ENCODE measurements at regions of chr7 and their contacts with region 1.

Region 1: DNA sequence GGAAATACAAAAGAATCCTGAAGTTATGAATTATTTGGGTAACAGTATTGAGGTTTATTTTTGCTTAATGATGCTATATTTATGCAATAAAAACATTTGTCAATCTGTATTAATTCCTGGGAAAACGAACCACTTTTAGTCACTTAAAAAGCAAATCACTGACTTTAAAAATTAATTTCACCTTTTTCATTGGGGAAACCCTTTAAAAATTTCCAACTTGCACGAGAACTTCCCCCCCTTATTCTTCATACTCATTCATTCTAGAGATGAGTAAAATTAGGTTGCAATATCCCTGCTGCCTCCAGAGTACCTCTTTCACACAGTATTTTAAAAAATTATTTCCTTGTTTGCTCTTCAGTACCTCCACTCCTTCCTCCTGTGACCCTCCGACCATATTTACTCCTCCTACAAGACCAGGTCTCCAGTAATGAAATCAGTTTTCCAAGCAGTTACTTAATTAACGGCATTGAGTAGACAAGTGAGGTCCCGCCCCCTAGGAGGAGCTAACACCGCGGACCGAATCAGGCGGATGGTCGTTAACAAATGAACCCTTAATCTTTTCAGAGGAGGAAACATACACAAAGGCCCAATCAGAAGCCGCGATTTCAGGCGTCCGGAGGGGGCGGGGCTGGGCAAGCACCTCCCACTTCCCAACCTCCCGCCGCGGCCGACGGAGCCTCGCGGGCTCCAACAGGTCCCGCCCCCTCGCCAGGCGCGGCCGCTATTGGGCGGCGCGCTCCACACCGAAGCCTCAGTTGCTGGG is 465 bp upstream of the TRIM24 start:
- DNase-seq: peak; percentile 97
- H3K4me3 Mint-ChIP-seq: peak overlapping the region; percentile 79
- H3K27ac Mint-ChIP-seq: peak overlapping the region; percentile 18
- H3K4me1 Mint-ChIP-seq: peaks cover 26% of the 10 kb centered on the region
- H3K27me3 Mint-ChIP-seq: no peaks in the 10 kb centered on the region

Region 2: GRCh38 chr7:137930581-137930980 is 529.0 kb before region 1 on chr7:
- intact Hi-C with region 1: no loop called
- DNase-seq: no peak
- H3K4me3 Mint-ChIP-seq: no peak overlapping the region
- H3K27ac Mint-ChIP-seq: no peak overlapping the region
- H3K4me1 Mint-ChIP-seq: peaks cover 32% of the 10 kb centered on the region
- H3K27me3 Mint-ChIP-seq: no peaks in the 10 kb centered on the region

Region 3: DNA sequence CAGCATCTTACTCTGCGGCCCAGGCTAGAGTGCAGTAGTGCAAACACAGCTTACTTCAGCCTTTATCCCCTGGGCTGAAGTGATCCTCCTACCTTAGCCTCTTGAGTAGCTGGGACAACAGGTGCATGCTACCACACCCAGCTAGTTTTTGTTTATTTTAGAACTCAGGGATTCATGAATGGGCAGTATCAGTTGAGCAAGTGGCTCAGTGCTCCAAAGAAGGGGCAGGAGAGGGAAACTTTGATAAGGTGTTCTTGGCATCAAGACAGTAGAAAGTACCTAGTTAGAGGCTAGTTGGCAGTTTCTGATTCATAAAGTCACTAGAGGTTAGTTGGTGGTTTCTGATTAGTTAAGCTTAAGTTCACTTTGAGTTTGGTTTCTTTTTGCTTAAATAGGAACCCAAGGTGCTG is 18.9 kb after region 1 on chr7:
- intact Hi-C with region 1: loop called (anchors 2 kb)
- DNase-seq: no peak
- H3K4me3 Mint-ChIP-seq: no peak overlapping the region
- H3K27ac Mint-ChIP-seq: no peak overlapping the region
- H3K4me1 Mint-ChIP-seq: peaks cover 48% of the 10 kb centered on the region
- H3K27me3 Mint-ChIP-seq: no peaks in the 10 kb centered on the region

Region 4: GRCh38 chr7:138575897-138576428 is 116.4 kb after region 1 on chr7:
- intact Hi-C with region 1: no loop called
- DNase-seq: no peak
- H3K4me3 Mint-ChIP-seq: no peak overlapping the region
- H3K27ac Mint-ChIP-seq: no peak overlapping the region
- H3K4me1 Mint-ChIP-seq: no peaks in the 10 kb centered on the region
- H3K27me3 Mint-ChIP-seq: no peaks in the 10 kb centered on the region

Region 5: DNA sequence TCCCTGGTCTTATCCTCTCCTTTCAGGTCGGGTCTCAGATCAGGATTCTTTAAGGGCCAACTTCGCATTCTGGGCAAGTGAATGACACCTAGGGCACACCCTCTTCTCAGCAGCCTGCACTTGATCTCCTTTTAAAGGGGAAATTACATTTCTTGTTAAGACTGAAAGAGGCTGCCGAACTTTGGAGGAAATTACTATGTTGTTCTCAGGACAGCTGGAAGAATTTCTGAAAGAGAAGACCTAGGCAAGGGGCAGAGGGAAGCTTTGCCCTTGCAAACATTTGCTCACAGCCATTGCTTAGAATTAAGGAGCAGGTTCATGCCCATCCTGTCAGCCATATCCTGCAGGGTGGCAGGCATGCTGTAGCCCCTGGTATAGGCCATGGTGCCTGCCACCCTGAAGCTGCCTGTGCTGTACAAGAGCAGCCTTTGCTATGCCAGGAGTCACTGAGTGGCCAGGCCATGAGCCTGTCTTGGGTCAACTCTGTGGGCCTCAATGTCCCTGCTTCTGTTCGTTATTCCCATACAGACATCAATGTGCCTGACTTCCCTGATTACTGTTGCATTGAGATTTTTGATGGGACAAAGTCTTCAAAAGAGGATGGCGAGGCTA is 241.8 kb after region 1 on chr7 and contains the start of gene SVOPL:
- intact Hi-C with region 1: no loop called
- DNase-seq: no peak
- H3K4me3 Mint-ChIP-seq: no peak within 1 kb of the TSS
- H3K27ac Mint-ChIP-seq: no peak within 1 kb of the TSS
- H3K4me1 Mint-ChIP-seq: no peaks in the 10 kb centered on the region
- H3K27me3 Mint-ChIP-seq: peaks cover 5% of the 10 kb centered on the region
- total RNA-seq, gene SVOPL: not detected in 2 replicates

Region 6: GRCh38 chr7:138738551-138739335 is 279.1 kb after region 1 on chr7:
- intact Hi-C with region 1: loop called (anchors 2 kb)
- DNase-seq: peak; percentile 72
- H3K4me3 Mint-ChIP-seq: no peak overlapping the region
- H3K27ac Mint-ChIP-seq: no peak overlapping the region
- H3K4me1 Mint-ChIP-seq: peaks cover 6% of the 10 kb centered on the region
- H3K27me3 Mint-ChIP-seq: no peaks in the 10 kb centered on the region

Region 7: DNA sequence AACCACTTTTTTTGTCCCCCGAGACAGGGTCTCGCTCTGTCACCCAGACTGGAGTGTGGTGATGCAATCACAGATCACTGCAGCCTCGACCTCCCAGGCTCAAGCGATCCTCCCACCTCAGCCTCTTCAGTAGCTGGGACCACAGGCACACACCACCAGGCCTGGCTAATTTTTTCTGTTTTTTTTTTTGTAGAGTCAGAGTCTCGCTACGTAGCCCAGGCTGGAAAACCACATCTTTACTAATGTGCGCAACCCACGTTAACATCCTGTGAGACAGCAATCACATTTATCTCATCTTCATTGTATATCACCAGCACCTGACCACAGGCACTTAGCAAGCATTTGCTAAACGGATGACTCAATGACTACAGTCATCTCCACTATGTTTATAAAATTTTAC is 416.2 kb after region 1 on chr7:
- intact Hi-C with region 1: loop called (anchors 2 kb)
- DNase-seq: peak; percentile 74
- H3K4me3 Mint-ChIP-seq: no peak overlapping the region
- H3K27ac Mint-ChIP-seq: peak overlapping the region; percentile 74
- H3K4me1 Mint-ChIP-seq: peaks cover 24% of the 10 kb centered on the region
- H3K27me3 Mint-ChIP-seq: no peaks in the 10 kb centered on the region